CD8-positive, alpha-beta memory T cell (primary cell): ENCODE measurements at regions of chr14 and their contacts with region 1.

Region 1: DNA sequence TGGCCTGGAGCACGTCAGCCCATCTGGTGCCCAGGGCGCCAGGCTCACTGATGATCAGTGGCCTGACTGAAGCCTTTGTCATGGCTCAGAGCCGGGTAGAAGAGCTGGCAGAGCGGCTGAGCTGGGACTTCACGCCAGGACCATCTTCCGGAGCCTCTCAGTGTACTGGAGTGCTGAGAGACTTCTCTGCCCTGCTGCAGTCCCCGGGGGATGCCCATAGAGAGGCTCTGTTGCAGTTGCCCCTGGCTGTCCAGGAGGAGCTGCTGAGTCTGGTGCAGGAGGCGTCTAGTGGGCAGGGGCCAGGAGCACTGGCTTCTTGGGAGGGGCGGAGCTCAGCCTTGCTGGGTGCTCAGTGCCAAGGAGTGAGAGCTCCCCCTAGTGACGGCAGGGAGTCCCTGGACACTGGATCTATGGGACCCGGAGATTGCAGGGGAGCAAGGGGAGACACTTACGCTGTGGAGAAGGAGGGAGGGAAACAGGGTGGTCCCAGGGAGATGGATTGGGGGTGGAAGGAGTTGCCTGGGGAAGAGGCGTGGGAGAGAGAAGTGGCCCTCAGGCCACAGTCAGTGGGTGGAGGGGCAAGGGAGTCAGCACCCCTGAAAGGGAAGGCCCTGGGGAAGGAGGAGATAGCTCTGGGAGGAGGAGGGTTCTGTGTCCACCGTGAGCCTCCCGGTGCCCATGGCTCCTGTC is 2.0 kb downstream of the KHNYN start:
- DNase-seq: peak; percentile 81 to 91 (median 83)
- H3K4me3 ChIP-seq: peak overlapping the region; percentile 82
- H3K4me3 Mint-ChIP-seq: peak overlapping the region; percentile 89 to 95 (median 91)
- H3K27ac ChIP-seq: no peak overlapping the region
- H3K27ac Mint-ChIP-seq: peak overlapping the region; percentile 77 to 97 (median 94)
- H3K4me1 ChIP-seq: peaks cover 48% of the 10 kb centered on the region
- H3K4me1 Mint-ChIP-seq: peaks cover 29 to 55% (median 39%) of the 10 kb centered on the region in 3 donors
- H3K27me3 ChIP-seq: no peaks in the 10 kb centered on the region
- H3K27me3 Mint-ChIP-seq: no peaks in the 10 kb centered on the region

Region 2: DNA sequence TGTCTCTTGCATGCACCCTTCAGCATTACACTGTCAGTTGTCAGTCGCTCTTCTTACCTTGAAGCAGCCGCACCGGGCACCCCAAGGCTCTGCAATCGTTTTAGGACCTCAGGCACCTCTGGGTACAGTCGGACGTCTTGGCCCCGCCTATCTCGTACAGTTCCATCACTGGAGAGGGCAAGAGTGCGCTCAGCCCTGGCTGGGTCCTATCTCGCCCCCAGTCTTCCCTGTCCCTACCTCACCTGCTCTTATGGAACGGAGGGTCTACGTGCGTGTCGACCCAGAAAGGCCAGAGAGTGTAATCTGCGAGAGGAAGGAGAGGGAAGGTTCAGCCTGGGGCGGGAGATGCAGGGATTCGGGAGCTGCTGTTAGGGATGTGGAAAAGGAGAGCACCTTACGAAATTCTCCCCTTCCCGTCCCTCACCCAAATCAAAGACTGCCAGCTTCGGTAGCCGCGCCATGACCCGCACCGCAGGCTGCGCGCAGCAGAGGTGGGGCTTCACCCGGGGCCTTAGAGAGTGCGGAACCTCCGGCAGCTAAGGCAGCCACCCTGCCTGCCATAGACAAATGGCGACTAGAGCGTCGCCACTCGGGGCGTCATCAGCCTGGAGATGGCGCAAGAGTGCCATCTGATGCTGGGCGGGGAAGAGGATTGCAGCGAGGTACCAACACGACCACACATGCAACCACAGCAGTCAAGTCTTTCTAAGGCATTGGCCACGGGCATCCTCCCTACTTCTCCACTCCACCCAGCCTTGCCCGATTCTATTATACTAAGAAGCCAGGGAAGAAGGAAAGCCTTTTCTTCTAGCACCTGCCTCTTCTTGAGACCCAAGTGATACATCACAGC is 216.0 kb before region 1 on chr14 and contains the start of gene MDP1:
- CTCF ChIA-PET with region 1: interaction called, 16 read pairs
- POLR2A ChIA-PET with region 1: interaction called, 8 read pairs
- DNase-seq: peak; percentile 76 to 92 (median 85)
- H3K4me3 ChIP-seq: peak within 1 kb of the TSS; percentile 94
- H3K4me3 Mint-ChIP-seq: peak within 1 kb of the TSS; percentile 87 to 97 (median 95)
- H3K27ac ChIP-seq: peak within 1 kb of the TSS; percentile 97
- H3K27ac Mint-ChIP-seq: peak within 1 kb of the TSS; percentile 95 to 100 (median 98)
- H3K4me1 ChIP-seq: peaks cover 39% of the 10 kb centered on the region
- H3K4me1 Mint-ChIP-seq: peaks cover 38 to 54% (median 50%) of the 10 kb centered on the region in 3 donors
- H3K27me3 ChIP-seq: no peaks in the 10 kb centered on the region
- H3K27me3 Mint-ChIP-seq: no peaks in the 10 kb centered on the region
- total RNA-seq, gene MDP1: 15.5 to 16.2 TPM

Region 3: DNA sequence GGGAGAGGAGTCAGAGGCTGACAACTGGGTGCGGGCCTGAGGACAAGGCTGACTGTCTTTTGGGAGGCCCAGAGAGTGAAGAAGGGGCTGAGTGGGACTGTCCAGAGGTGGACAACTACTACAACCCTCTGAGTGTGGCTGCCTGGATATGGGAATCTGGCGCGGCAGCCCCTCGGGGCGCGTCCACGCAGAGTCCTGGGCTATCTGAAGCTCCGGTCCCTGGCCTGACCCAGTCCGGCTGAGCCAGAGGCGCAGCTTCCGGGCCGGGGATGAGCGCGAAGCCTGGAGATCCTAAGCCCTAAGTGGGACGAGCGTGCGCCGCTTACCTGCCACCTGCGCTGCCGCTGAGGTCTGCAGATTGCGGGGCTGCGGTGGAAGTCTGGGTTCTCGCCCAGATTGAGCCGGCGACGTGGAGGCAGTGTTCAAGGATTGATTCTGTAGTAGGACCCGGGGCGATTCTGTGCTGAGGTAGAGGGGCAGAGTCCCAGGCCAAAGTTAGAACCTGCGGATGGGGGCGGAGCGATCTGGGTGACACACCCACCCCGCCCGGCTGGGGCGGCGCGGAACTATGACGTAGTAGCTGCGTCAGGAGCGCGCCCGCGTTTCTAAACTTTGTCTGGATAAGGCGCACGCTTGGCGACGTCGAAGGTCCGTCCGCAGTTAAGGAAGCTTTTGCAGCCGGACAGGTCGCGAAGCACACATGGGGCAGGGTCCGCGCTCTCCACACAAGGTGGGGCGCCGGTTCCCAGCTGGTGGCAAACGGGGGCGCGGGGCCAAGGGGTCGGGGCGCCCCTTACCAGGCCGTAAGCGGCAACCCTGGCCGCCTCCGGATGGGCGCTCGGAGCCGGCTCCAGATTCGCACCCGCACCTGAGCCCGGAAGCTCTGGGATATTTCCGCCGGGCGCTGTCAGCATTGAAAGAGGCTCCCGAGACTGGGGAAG is 132.2 kb before region 1 on chr14 and contains the starts of genes DHRS1 and NOP9:
- CTCF ChIA-PET with region 1: interaction called, 9 read pairs
- POLR2A ChIA-PET with region 1: interaction called, 13 read pairs
- DNase-seq: peak; percentile 87 to 93 (median 89)
- H3K4me3 ChIP-seq: peak within 1 kb of the TSS; percentile 83
- H3K4me3 Mint-ChIP-seq: peak within 1 kb of the TSS; percentile 89 to 97 (median 92)
- H3K27ac ChIP-seq: peak within 1 kb of the TSS; percentile 79
- H3K27ac Mint-ChIP-seq: peak within 1 kb of the TSS; percentile 94 to 99 (median 96)
- H3K4me1 ChIP-seq: peaks cover 47% of the 10 kb centered on the region
- H3K4me1 Mint-ChIP-seq: peaks cover 41 to 59% (median 54%) of the 10 kb centered on the region in 3 donors
- H3K27me3 ChIP-seq: no peaks in the 10 kb centered on the region
- H3K27me3 Mint-ChIP-seq: no peaks in the 10 kb centered on the region
- total RNA-seq, gene DHRS1: 9.3 to 9.8 TPM
- total RNA-seq, gene NOP9: 44.1 to 47.1 TPM

Region 4: DNA sequence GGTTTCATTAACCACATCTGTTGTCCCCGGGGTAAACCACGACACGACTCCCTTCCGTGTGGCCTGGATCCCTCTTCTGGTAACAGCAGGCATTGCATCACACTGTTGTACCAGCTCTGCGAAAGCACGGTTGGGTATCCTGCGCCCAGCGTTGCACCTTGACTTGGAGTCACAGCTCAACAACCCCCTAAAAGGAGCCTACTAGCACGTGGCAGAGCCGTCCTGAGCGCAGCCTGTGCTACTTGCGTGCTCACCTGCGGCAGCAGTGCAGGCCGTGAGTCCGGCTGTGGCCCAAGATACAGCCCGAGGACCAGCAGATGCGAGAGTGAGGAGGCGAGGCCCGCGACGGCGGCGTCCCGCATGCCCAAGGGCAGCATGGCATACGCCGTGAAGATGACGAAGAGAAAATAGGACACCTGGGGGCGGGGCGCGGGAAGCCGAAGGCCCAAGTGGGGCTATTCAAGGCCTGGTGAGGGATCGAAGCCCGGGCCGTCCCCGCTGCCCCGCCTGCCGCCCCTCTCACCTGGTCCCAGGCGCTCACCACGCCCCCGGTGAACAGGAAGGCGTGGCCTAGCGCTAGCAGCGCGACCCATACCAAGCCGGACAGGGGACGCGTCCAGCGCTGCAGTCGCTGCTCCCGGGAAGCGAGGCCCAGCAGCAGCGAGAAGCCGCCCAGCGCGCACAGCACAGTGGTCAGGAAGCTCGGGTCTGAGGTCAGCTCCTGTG is 99.3 kb before region 1 on chr14:
- CTCF ChIA-PET with region 1: interaction called, 486 read pairs
- POLR2A ChIA-PET with region 1: interaction called, 78 read pairs
- DNase-seq: peak; percentile 70 to 92 (median 85)
- H3K4me3 ChIP-seq: peak overlapping the region; percentile 44
- H3K4me3 Mint-ChIP-seq: peak overlapping the region; percentile 63 to 86 (median 79)
- H3K27ac ChIP-seq: no peak overlapping the region
- H3K27ac Mint-ChIP-seq: peak overlapping the region; percentile 15 to 90 (median 80)
- H3K4me1 ChIP-seq: peaks cover 69% of the 10 kb centered on the region
- H3K4me1 Mint-ChIP-seq: peaks cover 69 to 89% (median 83%) of the 10 kb centered on the region in 3 donors
- H3K27me3 ChIP-seq: peaks cover 17% of the 10 kb centered on the region
- H3K27me3 Mint-ChIP-seq: peaks cover 21 to 27% of the 10 kb centered on the region in 2 donors

Region 5: DNA sequence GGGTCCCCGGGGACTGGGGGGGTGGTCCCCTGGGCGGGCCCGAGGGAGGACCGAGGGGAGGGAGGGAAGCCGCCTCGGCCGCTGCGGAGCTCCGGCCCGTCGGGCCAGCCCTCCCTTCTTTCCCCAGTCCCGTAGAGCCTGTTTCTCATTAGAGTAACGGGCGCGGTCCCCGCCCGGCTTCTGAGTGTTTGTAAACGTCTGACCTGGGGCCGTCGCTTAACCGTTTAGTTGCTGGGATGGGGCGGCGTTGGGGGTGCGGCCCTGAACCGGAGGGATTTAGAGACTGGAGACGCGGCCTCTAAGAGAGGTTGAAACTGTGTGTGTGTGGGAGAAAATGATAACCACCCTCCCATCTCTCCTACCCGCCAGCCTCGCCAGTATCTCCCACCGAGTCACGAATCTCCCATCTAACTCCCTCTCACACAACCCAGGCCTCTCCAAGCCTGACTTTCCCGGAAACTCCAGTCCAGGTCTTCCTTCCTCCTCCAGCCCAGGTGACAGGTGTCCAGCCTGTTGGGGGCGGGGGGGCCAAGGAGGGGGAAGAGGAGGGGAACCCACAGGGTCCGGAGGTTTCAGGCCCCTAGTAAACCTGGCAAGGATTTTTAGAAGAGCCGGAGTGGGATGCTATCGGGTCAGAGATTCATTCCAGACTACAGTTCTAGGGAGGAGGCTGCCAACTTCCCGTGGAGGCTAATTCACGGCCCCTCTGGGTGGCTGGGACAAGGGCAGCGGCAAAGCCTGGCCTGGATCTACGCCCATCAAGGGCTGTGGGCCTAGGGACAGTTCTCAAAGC is 64.8 kb before region 1 on chr14:
- CTCF ChIA-PET with region 1: interaction called, 26 read pairs
- POLR2A ChIA-PET with region 1: interaction called, 14 read pairs
- DNase-seq: peak in 3 of 5 donors; percentile 16 to 48 (median 27)
- H3K4me3 ChIP-seq: peak overlapping the region; percentile 28
- H3K4me3 Mint-ChIP-seq: peak overlapping the region in 6 of 7 donors; percentile 27 to 76 (median 74)
- H3K27ac ChIP-seq: peak overlapping the region; percentile 20
- H3K27ac Mint-ChIP-seq: peak overlapping the region in 3 of 8 donors; percentile 27 to 86 (median 69)
- H3K4me1 ChIP-seq: peaks cover 30% of the 10 kb centered on the region
- H3K4me1 Mint-ChIP-seq: peaks cover 28 to 36% (median 34%) of the 10 kb centered on the region in 3 donors
- H3K27me3 ChIP-seq: peaks cover 45% of the 10 kb centered on the region
- H3K27me3 Mint-ChIP-seq: peaks cover 38 to 52% of the 10 kb centered on the region in 2 donors